ENCODE measurements at regions of chr3 and their contacts with region 1.

Region 1: DNA sequence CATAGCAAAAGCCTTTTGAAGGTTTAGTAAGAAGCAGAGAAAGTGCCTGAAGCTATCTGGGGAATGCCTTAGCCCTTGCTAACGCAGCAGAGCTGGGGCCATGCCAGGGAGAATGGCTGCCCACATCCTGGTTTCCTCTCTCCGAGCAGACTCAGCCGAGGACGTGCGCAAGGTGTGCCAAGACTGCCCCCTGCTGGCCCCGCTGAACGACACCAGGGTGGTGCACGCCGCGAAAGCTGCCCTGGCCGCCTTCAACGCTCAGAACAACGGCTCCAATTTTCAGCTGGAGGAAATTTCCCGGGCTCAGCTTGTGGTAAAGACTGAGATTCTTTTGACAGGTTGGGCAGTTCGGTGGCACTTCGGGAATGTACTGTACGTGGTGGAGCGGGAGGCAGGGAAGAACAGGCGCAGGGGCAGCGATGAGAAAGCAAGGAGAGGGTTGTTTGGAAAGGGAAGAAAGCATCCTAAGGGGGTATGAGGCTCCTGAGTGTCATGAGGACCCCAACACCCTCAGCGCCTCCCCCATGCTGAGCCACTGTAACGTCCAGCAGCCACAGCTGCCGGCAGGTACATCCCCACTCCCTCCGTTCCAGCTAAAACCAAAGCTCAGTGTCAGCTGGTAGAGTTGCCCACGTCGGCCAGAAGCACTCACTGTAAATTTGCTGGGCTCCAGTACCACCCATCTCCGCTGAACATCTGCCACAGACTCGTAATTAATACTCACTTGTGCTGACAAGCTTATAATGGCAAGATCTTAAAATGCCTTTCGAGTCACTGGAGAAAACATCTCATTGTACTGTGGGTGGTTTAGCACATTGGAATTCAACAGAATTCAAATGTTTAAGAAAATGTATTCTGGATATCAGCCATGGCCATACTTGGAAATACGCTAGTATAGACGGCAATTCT is 4.4 kb downstream of the AHSG start:
- DNase-seq: peak; percentile 85 to 96 (median 93)
- ATAC-seq: peak; percentile 97 to 99 (median 98)
- H3K4me3 ChIP-seq: peak overlapping the region in 2 of 4 donors; percentile 10 to 21
- H3K27ac ChIP-seq: no peak overlapping the region
- H3K4me1 ChIP-seq: peaks cover 0 to 4% (median 0%) of the 10 kb centered on the region in 3 donors
- H3K27me3 ChIP-seq: no peaks in the 10 kb centered on the region
- CTCF ChIP-seq: peak; percentile 85 to 94 (median 92)

Region 2: GRCh38 chr3:186759231-186759930 is 142.1 kb after region 1 on chr3:
- intact Hi-C with region 1: loop called in 1 of 3 experiments (anchors 10 kb)
- DNase-seq: no peak
- ATAC-seq: no peak
- H3K4me3 ChIP-seq: no peak overlapping the region
- H3K27ac ChIP-seq: no peak overlapping the region
- H3K4me1 ChIP-seq: no peaks in the 10 kb centered on the region
- H3K27me3 ChIP-seq: no peaks in the 10 kb centered on the region
- CTCF ChIP-seq: no peak

Region 3: DNA sequence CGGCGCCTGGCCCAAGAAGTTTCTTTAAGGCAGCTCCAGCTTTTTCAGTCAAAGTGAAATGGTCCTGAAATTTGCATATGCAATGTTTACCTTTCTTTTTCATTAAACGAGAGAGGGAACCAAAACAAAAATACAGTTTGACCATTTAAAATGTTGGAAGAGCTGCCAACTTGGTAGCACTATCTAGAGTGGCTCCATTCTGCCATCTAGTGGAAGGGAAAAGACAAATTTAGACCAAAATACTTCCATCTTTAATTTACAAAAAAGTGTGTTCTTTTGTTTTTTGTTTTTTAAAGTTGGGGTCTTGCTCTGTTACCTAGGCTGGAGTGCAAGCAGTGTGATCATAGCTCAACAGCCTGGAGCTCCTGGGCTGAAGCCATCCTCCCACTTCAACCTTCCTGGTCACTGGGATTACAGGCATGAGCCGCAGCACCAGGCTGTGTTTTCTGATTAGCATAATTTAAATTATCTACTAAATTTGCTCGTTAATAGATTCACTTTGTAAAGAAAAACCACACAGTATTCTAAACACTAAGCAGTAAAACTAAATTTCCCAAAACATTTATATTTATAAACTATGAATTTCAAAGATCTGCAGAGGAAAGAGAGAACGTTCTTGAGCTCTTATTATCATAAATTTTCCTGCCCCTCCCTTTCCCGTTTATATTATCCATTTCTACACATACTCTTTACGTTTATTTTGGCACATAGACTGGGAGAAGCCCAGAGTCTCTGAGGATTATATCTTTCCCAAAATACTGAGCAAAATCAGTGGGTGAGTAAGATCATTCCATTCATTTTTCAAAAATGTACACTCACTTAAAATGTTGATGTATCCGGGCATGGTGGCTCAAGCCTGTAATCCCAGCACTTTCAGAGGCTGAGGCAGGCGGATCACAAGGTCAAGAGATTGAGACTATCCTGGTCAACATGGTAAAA is 204.4 kb after region 1 on chr3:
- intact Hi-C with region 1: loop called in 1 of 3 experiments (anchors 5 kb)
- DNase-seq: no peak
- ATAC-seq: peak in 3 of 4 donors; percentile 62 to 75 (median 73)
- H3K4me3 ChIP-seq: no peak overlapping the region
- H3K27ac ChIP-seq: no peak overlapping the region
- H3K4me1 ChIP-seq: no peaks in the 10 kb centered on the region
- H3K27me3 ChIP-seq: peaks cover 0 to 8% (median 0%) of the 10 kb centered on the region in 4 donors
- CTCF ChIP-seq: peak; percentile 12 to 56 (median 36)

Measured in pancreas (tissue), 10 donors.